Activated T-helper 1 cell treated with anti-CD3 and anti-CD28 coated beads, Interleukin-12 subunit alpha, Interleukin-12 subunit beta, Interleukin-2, Interleukin-4 antibody, amounts not matched to agents 30 ng/mL and 10 ng/mL and 1 ng/mL, durations not matched to agents 14 hours and 24 hours and 36 hours (primary cell): ENCODE measurements at regions of chr1 and their contacts with region 1.

Region 1: DNA sequence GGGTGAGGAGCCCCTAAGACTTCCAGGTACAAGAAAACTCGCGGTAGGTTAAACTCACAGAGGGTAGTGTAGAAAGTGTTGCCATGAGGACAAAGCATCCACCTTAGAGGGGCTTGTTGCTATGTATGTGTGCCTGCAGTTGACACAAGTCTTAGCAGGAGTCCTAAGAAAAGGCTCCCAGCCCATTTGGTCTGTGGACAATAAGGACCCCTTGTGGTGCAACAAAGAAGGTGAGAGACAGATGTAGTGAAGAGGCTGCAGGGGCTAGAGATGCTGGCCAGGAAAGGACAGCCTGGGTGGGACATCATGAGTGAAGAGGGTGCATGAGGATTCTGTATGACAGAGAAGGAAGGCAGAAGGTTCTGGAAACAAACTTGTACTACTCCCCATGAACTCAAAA is 36.3 kb upstream of the IL10 start:
- DNase-seq: peak; percentile 43
- H3K4me3 Mint-ChIP-seq: no peak overlapping the region
- H3K27ac Mint-ChIP-seq: peak overlapping the region; percentile 15
- H3K4me1 Mint-ChIP-seq: peaks cover 57% of the 10 kb centered on the region
- H3K27me3 Mint-ChIP-seq: peaks cover 13% of the 10 kb centered on the region

Region 2: DNA sequence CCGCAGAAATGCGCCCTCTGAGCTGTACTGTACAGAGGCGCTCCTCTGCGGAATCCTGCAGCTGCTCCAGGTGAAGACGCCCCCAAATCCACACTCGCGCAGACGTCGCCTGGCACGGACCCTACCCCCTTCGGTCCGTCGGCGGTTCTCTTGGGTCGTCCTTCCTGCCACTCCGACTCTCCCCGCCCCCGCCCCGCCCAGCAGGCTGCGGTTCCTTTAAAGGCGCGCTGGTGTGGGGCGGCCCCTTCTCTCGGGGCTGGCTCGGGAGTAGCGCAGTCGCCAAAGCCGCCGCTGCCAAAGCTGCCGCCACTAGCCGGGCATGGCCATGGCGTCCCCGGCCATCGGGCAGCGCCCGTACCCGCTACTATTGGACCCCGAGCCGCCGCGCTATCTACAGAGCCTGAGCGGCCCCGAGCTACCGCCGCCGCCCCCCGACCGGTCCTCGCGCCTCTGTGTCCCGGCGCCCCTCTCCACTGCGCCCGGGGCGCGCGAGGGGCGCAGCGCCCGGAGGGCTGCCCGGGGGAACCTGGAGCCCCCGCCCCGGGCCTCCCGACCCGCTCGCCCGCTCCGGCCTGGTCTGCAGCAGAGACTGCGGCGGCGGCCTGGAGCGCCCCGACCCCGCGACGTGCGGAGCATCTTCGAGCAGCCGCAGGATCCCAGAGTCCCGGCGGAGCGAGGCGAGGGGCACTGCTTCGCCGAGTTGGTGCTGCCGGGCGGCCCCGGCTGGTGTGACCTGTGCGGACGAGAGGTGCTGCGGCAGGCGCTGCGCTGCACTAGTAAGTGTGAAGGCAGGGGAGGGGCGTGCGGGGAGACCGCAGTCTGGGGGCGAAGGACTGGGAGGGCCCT is 301.1 kb before region 1 on chr1 and contains the start of gene RASSF5:
- intact Hi-C with region 1: loop called (anchors 10 kb)
- DNase-seq: peak; percentile 82
- H3K4me3 Mint-ChIP-seq: peak within 1 kb of the TSS; percentile 78
- H3K27ac Mint-ChIP-seq: peak within 1 kb of the TSS; percentile 47
- H3K4me1 Mint-ChIP-seq: peaks cover 54% of the 10 kb centered on the region
- H3K27me3 Mint-ChIP-seq: peaks cover 17% of the 10 kb centered on the region
- total RNA-seq, gene RASSF5: 220 and 221 TPM in 2 replicates

Region 3: GRCh38 chr1:206635080-206635977 is 173.3 kb before region 1 on chr1 and contains the start of gene DYRK3:
- intact Hi-C with region 1: loop called (anchors 1 kb)
- DNase-seq: peak; percentile 95
- H3K4me3 Mint-ChIP-seq: peak within 1 kb of the TSS; percentile 89
- H3K27ac Mint-ChIP-seq: peak within 1 kb of the TSS; percentile 95
- H3K4me1 Mint-ChIP-seq: peaks cover 38% of the 10 kb centered on the region
- H3K27me3 Mint-ChIP-seq: peaks cover 7% of the 10 kb centered on the region
- total RNA-seq, gene DYRK3: 22.1 and 23.3 TPM in 2 replicates

Region 4: DNA sequence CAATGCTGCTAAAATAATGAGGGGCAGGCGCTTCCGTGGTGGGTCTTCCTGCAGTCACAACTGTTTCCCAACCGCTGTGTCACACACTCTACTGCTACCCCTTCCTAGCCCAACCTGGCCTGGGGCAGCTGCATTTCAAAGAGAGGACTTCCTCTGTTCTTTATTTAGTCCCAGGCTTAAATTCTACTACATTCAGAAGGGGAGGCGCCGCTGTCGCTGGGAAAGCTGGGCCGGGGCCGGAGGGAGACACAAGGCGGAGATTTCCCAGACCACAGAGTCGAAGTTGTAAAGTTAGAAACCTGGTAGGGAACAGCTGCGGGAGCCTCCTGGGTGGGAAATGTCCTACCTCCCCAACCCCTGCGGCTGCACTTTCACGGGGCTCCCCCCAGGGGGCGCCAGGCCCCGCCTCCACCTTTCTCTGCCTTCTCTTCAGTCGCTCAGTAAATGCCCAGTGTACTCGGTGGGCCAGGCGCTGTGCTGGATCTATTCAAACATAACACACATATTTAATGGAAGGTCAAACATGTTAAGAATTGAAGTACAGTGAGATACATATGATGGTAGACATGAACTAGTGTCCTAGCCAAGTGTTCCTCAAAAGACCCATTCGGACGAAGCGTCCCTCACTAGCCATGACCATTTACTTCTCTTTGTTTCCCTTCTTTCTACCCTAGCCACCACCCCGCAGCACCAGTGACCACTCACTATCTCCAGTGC is 150.2 kb before region 1 on chr1:
- intact Hi-C with region 1: loop called (anchors 2 kb)
- DNase-seq: peak; percentile 43
- H3K4me3 Mint-ChIP-seq: no peak overlapping the region
- H3K27ac Mint-ChIP-seq: no peak overlapping the region
- H3K4me1 Mint-ChIP-seq: peaks cover 26% of the 10 kb centered on the region
- H3K27me3 Mint-ChIP-seq: no peaks in the 10 kb centered on the region

Region 5: GRCh38 chr1:206725109-206725963 is 83.3 kb before region 1 on chr1:
- intact Hi-C with region 1: loop called (anchors 1 kb)
- DNase-seq: peak; percentile 37
- H3K4me3 Mint-ChIP-seq: no peak overlapping the region
- H3K27ac Mint-ChIP-seq: peak overlapping the region; percentile 7
- H3K4me1 Mint-ChIP-seq: peaks cover 63% of the 10 kb centered on the region
- H3K27me3 Mint-ChIP-seq: no peaks in the 10 kb centered on the region

Region 6: DNA sequence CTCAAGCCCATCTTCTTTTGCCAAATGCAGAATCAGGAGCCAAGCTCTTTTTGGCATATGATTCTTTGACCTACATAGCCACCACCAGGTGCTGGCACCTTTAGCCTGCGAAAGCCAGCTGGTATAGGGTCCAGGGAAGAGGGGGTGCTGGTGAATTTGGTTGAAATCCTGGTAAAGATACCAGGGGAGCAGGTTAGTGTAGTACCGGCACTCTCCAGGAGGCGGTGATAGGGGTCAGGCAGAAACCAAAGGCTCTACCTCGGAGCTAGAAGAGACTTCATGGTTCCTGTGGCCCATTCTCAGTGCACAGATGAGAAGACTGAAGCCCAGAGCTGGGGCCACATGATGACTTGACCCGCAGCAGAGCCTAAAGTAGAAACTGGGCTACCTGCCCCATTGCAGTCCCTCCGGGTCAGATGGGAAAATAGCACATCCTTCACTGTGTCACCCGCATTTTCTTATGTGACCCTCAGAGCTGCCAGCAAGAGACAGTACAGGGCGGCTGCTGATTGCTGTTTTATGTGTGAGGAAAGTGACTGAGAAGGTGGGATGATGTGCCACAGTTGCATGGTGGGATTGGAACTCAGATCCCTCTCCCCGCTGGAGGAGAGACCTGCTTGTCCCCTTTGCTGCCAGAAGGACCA is 74.0 kb before region 1 on chr1:
- intact Hi-C with region 1: loop called (anchors 1 kb)
- DNase-seq: peak; percentile 56
- H3K4me3 Mint-ChIP-seq: no peak overlapping the region
- H3K27ac Mint-ChIP-seq: no peak overlapping the region
- H3K4me1 Mint-ChIP-seq: peaks cover 61% of the 10 kb centered on the region
- H3K27me3 Mint-ChIP-seq: no peaks in the 10 kb centered on the region

Region 7: DNA sequence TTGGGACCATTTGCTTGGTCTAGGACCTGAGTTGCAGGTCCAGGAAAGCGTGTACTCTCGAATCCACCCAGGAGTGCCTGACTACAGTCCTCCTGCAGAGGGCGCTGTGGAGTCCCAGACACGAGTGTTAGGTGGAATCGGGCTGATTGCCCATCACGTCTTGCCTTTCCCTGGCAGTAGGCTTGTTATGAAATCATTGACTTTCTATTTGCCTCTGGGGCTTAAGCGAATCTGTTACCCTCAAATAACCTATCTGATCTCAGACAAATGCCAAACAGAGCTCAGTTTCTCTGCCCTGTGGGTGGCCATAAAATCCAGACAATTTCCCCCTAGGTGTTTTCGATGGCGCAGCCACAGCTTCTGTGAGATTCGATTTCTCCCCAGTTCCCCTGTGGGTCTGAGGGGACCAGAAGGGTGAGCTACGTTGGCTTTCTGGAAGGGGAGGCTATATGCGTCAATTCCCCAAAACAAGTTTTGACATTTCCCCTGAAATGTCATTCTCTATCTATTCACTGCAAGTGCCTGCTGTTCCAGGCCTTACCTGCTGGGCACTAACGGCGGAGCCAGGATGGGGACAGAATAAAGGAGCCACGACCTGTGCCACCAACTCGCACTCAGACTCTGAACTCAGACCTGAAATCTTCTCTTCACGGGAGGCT is 56.5 kb after region 1 on chr1 and contains the start of gene IL20:
- intact Hi-C with region 1: no loop called
- DNase-seq: peak; percentile 68
- H3K4me3 Mint-ChIP-seq: no peak within 1 kb of the TSS
- H3K27ac Mint-ChIP-seq: no peak within 1 kb of the TSS
- H3K4me1 Mint-ChIP-seq: peaks cover 7% of the 10 kb centered on the region
- H3K27me3 Mint-ChIP-seq: peaks cover 39% of the 10 kb centered on the region
- total RNA-seq, gene IL20: not detected in 2 replicates

Region 8: DNA sequence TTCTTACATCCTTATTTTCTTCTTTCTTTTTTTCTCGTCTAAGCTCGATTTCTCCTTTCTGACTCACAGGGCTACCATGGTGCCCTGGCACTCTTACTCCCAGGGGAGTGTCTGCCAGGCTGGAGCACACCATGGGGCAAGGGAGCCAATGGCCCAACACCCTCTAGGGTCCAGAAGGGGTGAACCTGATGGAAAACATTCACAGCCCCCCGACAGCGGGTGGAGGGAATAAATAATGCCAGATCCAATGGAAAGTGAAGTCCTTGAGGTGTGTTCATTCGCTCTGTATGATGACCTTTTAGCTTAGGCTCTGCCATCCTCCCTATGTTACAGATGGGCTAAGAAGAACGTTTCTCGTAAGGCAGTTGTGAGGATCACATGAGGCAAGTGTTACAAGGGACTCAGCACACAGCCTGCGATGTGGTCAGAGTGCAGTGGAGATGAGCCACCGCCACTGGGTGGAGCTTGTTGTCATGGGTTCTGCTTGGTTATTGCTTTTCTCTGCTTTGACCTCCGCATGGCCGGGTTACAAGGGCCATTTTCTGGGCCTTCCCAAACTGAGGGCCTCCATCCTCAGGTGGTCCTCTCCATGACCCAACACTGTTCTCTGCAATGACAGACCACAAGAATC is 116.6 kb after region 1 on chr1:
- intact Hi-C with region 1: no loop called
- DNase-seq: peak; percentile 36
- H3K4me3 Mint-ChIP-seq: no peak overlapping the region
- H3K27ac Mint-ChIP-seq: no peak overlapping the region
- H3K4me1 Mint-ChIP-seq: peaks cover 13% of the 10 kb centered on the region
- H3K27me3 Mint-ChIP-seq: no peaks in the 10 kb centered on the region